ENCODE measurements at regions of chr14 and their contacts with region 1.

Region 1: GRCh38 chr14:30471980-30472379 is 87.0 kb upstream of the G2E3 start:
- DNase-seq: no peak
- H3K4me3 ChIP-seq: no peak overlapping the region
- H3K27ac ChIP-seq: no peak overlapping the region
- H3K4me1 ChIP-seq: no peaks in the 10 kb centered on the region
- H3K27me3 ChIP-seq: no peaks in the 10 kb centered on the region
- CTCF ChIP-seq: no peak
- POLR2A ChIP-seq: no peak

Region 2: GRCh38 chr14:31659278-31659677 is 1187.3 kb after region 1 on chr14:
- intact Hi-C with region 1: loop called (anchors 5 kb)
- DNase-seq: no peak
- H3K4me3 ChIP-seq: no peak overlapping the region
- H3K27ac ChIP-seq: no peak overlapping the region
- H3K4me1 ChIP-seq: no peaks in the 10 kb centered on the region
- H3K27me3 ChIP-seq: no peaks in the 10 kb centered on the region
- CTCF ChIP-seq: no peak
- POLR2A ChIP-seq: no peak

Measured in vagina (tissue), 2 donors.